Naive thymus-derived CD4-positive, alpha-beta T cell (primary cell): ENCODE measurements at regions of chr17 and their contacts with region 1.

Region 1: GRCh38 chr17:4143563-4144421 is 795 bp downstream of the CYB5D2 start:
- DNase-seq: peak; percentile 85 to 94 (median 91)
- ATAC-seq: peak; percentile 81
- H3K4me3 ChIP-seq: peak overlapping the region; percentile 90
- H3K4me3 Mint-ChIP-seq: peak overlapping the region; percentile 94 to 100 (median 99)
- H3K27ac ChIP-seq: peak overlapping the region; percentile 100
- H3K27ac Mint-ChIP-seq: peak overlapping the region; percentile 99 to 100 (median 100)
- H3K4me1 ChIP-seq: peaks cover 36 to 40% of the 10 kb centered on the region in 2 donors
- H3K4me1 Mint-ChIP-seq: peaks cover 36 to 48% (median 46%) of the 10 kb centered on the region in 7 donors
- H3K27me3 ChIP-seq: no peaks in the 10 kb centered on the region
- H3K27me3 Mint-ChIP-seq: peaks cover 0 to 2% (median 0%) of the 10 kb centered on the region in 5 donors

Region 2: GRCh38 chr17:3636154-3636907 is 507.5 kb before region 1 on chr17 and contains the starts of genes CTNS and SHPK:
- CTCF ChIA-PET with region 1: no interaction called
- POLR2A ChIA-PET with region 1: interaction called, 8 read pairs
- intact Hi-C with region 1: loop called in 1 of 2 experiments (anchors 1 kb)
- DNase-seq: peak; percentile 90 to 95 (median 95)
- ATAC-seq: peak; percentile 98
- H3K4me3 ChIP-seq: peak within 1 kb of the TSS; percentile 97
- H3K4me3 Mint-ChIP-seq: peak within 1 kb of the TSS; percentile 86 to 99 (median 98)
- H3K27ac ChIP-seq: peak within 1 kb of the TSS; percentile 98
- H3K27ac Mint-ChIP-seq: peak within 1 kb of the TSS; percentile 96 to 100 (median 99)
- H3K4me1 ChIP-seq: peaks cover 0 to 3% of the 10 kb centered on the region in 2 donors
- H3K4me1 Mint-ChIP-seq: peaks cover 17 to 45% (median 29%) of the 10 kb centered on the region in 7 donors
- H3K27me3 ChIP-seq: no peaks in the 10 kb centered on the region
- H3K27me3 Mint-ChIP-seq: no peaks in the 10 kb centered on the region
- total RNA-seq, gene CTNS: 4.7 to 15.2 (median 8.8) TPM
- total RNA-seq, gene SHPK: 6.3 to 11.2 (median 10.8) TPM

Region 3: GRCh38 chr17:3893003-3893719 is 250.6 kb before region 1 on chr17 and contains the start of gene CAMKK1:
- CTCF ChIA-PET with region 1: no interaction called
- POLR2A ChIA-PET with region 1: interaction called, 3 read pairs
- intact Hi-C with region 1: loop called (anchors 1 to 2 kb)
- DNase-seq: peak; percentile 71 to 96 (median 85)
- ATAC-seq: peak; percentile 87
- H3K4me3 ChIP-seq: peak within 1 kb of the TSS; percentile 70
- H3K4me3 Mint-ChIP-seq: peak within 1 kb of the TSS; percentile 81 to 90 (median 86)
- H3K27ac ChIP-seq: peak within 1 kb of the TSS; percentile 77
- H3K27ac Mint-ChIP-seq: peak within 1 kb of the TSS; percentile 73 to 93 (median 88)
- H3K4me1 ChIP-seq: peaks cover 11 to 23% of the 10 kb centered on the region in 2 donors
- H3K4me1 Mint-ChIP-seq: peaks cover 23 to 45% (median 35%) of the 10 kb centered on the region in 7 donors
- H3K27me3 ChIP-seq: no peaks in the 10 kb centered on the region
- H3K27me3 Mint-ChIP-seq: peaks cover 0 to 7% (median 0%) of the 10 kb centered on the region in 5 donors
- total RNA-seq, gene CAMKK1: 4.8 to 12.5 (median 6.3) TPM

Region 4: DNA sequence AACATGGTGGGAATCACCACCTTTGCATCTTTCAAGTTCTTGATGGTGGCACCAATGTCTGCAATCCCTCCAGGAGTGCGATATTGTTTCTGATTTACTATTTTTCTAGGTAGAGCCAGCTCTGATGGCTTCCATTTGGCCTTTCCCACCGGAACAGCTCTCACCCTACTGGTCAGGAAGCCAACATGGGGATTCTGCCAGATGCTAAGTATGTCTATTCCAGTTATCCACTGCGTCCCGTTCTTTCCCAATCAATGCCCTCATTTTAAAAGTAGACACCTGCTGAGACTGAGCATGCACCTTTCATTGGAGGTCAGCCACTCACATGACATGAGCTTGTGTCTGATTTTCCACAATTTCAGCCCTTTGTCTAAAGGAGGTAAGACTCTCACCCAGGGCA is 24.5 kb before region 1 on chr17:
- CTCF ChIA-PET with region 1: no interaction called
- POLR2A ChIA-PET with region 1: no interaction called
- intact Hi-C with region 1: no loop called
- DNase-seq: no peak
- ATAC-seq: no peak
- H3K4me3 ChIP-seq: no peak overlapping the region
- H3K4me3 Mint-ChIP-seq: no peak overlapping the region
- H3K27ac ChIP-seq: no peak overlapping the region
- H3K27ac Mint-ChIP-seq: no peak overlapping the region
- H3K4me1 ChIP-seq: no peaks in the 10 kb centered on the region
- H3K4me1 Mint-ChIP-seq: peaks cover 0 to 11% (median 4%) of the 10 kb centered on the region in 7 donors
- H3K27me3 ChIP-seq: no peaks in the 10 kb centered on the region
- H3K27me3 Mint-ChIP-seq: no peaks in the 10 kb centered on the region

Region 5: DNA sequence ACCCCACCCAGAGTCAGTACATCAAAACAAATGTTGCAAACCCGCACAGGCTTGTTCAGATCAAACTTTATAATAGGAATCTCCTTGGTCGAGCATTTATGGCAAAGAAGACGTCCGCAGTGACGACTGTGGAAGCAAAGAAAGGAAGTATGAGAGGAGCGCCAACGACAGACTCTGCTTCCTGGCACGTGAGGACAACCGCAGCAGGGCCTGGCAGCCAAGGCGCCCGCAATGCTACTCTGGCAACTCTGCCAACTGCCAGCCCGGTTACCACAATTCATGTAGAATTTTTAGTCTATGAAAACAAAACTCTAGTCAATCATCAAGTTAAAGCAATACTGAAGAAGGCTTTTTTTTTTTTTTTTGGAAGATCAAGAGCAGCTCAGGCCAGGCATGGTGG is 24.0 kb after region 1 on chr17:
- CTCF ChIA-PET with region 1: interaction called, 3 read pairs
- POLR2A ChIA-PET with region 1: interaction called, 132 read pairs
- intact Hi-C with region 1: no loop called
- DNase-seq: peak in 7 of 9 donors; percentile 22 to 70 (median 49)
- ATAC-seq: peak; percentile 83
- H3K4me3 ChIP-seq: no peak overlapping the region
- H3K4me3 Mint-ChIP-seq: peak overlapping the region in 6 of 10 donors; percentile 7 to 64 (median 32)
- H3K27ac ChIP-seq: peak overlapping the region; percentile 58
- H3K27ac Mint-ChIP-seq: peak overlapping the region in 8 of 9 donors; percentile 65 to 97 (median 89)
- H3K4me1 ChIP-seq: peaks cover 0 to 6% of the 10 kb centered on the region in 2 donors
- H3K4me1 Mint-ChIP-seq: peaks cover 5 to 31% (median 17%) of the 10 kb centered on the region in 7 donors
- H3K27me3 ChIP-seq: no peaks in the 10 kb centered on the region
- H3K27me3 Mint-ChIP-seq: no peaks in the 10 kb centered on the region

Region 6: DNA sequence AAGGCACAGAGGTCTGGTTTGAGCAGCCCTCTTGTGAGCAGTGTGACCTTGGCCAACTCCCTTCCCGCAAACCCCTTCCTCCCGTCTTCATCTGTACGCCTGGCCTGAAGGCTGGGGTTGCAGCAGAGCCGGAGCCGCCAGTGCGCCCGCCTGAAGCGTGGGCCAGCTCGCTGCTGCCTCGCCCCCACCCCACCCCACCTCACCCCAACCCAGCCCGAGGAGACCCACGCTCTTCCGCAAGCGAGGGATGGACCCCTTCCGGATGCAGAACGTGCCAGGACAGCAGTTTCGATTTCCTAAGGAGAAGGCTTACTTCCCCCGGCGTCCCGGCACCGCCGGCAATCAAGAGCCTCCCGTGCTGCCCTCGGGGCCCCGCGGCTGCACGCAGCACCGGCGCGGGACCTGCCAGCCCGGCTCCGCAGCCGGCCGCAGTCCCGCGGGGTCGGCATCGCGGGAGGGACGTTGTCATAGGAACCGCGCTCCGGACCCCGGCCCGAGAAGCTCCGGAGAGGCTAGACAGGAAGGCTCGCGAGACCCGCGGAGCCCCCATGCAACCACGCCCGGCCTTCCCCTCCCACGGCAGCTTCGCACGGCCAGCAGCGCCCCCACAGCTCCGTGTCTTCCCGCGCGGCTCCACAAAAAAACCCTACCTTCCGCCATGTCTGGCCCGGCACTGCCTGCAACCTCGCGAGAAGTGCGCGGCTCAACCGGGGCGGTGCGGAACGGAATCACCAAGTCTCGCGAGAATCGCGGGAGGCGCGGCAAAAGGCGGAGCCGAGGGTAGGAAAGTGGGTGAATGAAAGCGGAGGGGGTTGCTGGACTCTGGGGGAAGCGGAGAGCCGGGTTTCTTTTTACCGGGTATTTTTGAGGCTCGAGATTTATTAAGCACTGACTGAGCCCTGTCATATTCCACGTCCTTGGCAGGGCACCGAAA is 119.8 kb after region 1 on chr17 and contains the start of gene ANKFY1:
- CTCF ChIA-PET with region 1: no interaction called
- POLR2A ChIA-PET with region 1: interaction called, 6 read pairs
- intact Hi-C with region 1: loop called (anchors 1 kb)
- DNase-seq: peak; percentile 95 to 99 (median 97)
- ATAC-seq: peak; percentile 98
- H3K4me3 ChIP-seq: peak within 1 kb of the TSS; percentile 73
- H3K4me3 Mint-ChIP-seq: peak within 1 kb of the TSS; percentile 89 to 99 (median 94)
- H3K27ac ChIP-seq: peak within 1 kb of the TSS; percentile 94
- H3K27ac Mint-ChIP-seq: peak within 1 kb of the TSS; percentile 82 to 98 (median 95)
- H3K4me1 ChIP-seq: peaks cover 16 to 17% of the 10 kb centered on the region in 2 donors
- H3K4me1 Mint-ChIP-seq: peaks cover 27 to 49% (median 41%) of the 10 kb centered on the region in 7 donors
- H3K27me3 ChIP-seq: no peaks in the 10 kb centered on the region
- H3K27me3 Mint-ChIP-seq: no peaks in the 10 kb centered on the region
- total RNA-seq, gene ANKFY1: 52.4 to 84.5 (median 69.7) TPM

Region 7: DNA sequence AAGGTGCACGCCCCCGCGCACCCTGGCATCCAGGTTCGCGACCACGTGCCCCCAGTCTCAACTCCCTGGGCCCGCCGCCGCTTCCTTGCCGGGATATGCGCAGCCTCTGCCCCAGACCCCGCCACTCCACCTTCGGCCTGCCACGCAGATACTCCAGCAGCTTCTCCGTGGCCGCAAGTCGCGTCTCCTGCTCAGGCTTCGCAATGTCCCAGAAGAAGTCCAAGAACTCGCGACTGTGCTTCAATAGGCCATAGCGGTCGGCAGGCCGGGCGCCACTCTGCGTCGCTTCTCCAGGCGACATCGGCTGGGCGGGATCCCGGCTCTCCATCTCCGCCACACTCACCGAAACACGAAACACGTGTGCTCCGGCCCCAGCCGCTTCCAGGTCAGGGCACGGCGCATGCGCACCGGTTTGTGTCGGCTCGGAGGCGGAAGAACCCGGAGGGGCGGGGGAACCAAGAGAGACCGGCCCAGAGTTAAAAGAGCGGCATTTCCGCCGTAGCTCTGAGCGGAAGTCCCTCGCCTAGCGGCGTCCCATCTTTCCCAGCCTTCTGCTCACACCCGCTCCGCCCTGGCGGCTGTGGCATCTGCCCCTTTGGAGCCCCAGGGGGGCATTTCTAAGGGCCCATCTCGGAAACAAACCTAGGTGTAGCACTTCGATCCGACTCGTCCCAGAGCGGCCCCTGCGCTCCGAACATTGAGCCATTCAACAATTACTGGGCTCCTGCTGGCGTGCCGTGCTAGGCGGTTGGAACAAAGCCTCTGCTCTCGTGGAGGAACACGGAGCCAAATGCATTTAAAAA is 411.4 kb after region 1 on chr17 and contains the start of gene MYBBP1A:
- CTCF ChIA-PET with region 1: no interaction called
- POLR2A ChIA-PET with region 1: interaction called, 5 read pairs
- intact Hi-C with region 1: loop called in 1 of 2 experiments (anchors 1 kb)
- DNase-seq: peak; percentile 92 to 98 (median 95)
- ATAC-seq: peak; percentile 96
- H3K4me3 ChIP-seq: peak within 1 kb of the TSS; percentile 87
- H3K4me3 Mint-ChIP-seq: peak within 1 kb of the TSS; percentile 87 to 97 (median 95)
- H3K27ac ChIP-seq: peak within 1 kb of the TSS; percentile 79
- H3K27ac Mint-ChIP-seq: peak within 1 kb of the TSS; percentile 88 to 98 (median 96)
- H3K4me1 ChIP-seq: peaks cover 20% of the 10 kb centered on the region in 2 donors
- H3K4me1 Mint-ChIP-seq: peaks cover 16 to 34% (median 27%) of the 10 kb centered on the region in 7 donors
- H3K27me3 ChIP-seq: no peaks in the 10 kb centered on the region
- H3K27me3 Mint-ChIP-seq: no peaks in the 10 kb centered on the region
- total RNA-seq, gene MYBBP1A: 59.8 to 81.8 (median 77.9) TPM